ENCODE measurements at regions of chr2 and their contacts with region 1.

Region 1: GRCh38 chr2:207746131-207746530 is 23.6 kb downstream of the FZD5 start:
- DNase-seq: no peak
- H3K4me3 Mint-ChIP-seq: no peak overlapping the region
- H3K27ac Mint-ChIP-seq: no peak overlapping the region
- H3K4me1 Mint-ChIP-seq: no peaks in the 10 kb centered on the region
- H3K27me3 Mint-ChIP-seq: no peaks in the 10 kb centered on the region

Region 2: DNA sequence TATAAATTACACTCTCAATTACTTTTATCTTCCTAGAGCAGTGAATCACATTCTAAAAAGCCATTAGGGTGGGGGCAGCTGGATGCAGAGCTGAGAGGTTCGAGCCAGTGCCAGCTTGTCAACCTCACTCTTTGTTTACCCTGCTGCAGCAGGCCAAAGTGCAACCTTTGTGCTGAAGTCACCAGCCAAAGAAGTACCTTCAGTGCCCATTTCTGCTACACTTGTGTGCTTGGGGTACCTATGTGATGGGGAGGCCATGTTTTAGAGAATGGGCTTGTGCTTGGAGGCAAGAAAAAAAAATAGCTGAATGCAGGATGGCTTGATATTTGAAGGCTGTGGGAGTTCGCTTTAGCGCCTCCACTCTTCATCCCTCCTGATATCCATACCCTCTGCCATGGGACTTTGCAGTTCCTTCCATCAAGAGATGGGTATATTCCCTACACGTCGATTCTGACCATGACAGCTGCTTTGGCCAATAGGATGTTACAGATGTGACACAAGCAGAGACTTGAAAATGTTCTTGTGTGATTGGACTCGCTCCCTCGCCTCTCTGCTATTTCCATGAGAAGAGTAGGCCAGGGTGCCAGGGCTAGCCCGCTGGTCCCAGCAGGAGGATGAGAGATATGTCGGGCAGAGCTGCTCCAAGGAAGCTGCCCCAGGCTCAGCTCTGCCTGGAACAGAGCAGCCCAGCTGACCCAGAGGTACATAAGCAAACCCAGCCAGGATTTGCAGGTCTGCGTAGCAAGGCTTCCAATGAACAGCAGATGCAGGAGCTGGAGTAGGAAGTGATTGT is 36.3 kb after region 1 on chr2:
- intact Hi-C with region 1: no loop called
- DNase-seq: no peak
- H3K4me3 Mint-ChIP-seq: no peak overlapping the region
- H3K27ac Mint-ChIP-seq: no peak overlapping the region
- H3K4me1 Mint-ChIP-seq: no peaks in the 10 kb centered on the region
- H3K27me3 Mint-ChIP-seq: peaks cover 6% of the 10 kb centered on the region

Region 3: GRCh38 chr2:207974216-207974605 is 228.1 kb after region 1 on chr2:
- intact Hi-C with region 1: loop called (anchors 1 kb)
- DNase-seq: no peak
- H3K4me3 Mint-ChIP-seq: no peak overlapping the region
- H3K27ac Mint-ChIP-seq: no peak overlapping the region
- H3K4me1 Mint-ChIP-seq: peaks cover 4% of the 10 kb centered on the region
- H3K27me3 Mint-ChIP-seq: no peaks in the 10 kb centered on the region

Region 4: GRCh38 chr2:208040199-208041171 is 294.4 kb after region 1 on chr2:
- intact Hi-C with region 1: loop called (anchors 1 kb)
- DNase-seq: peak; percentile 56
- H3K4me3 Mint-ChIP-seq: no peak overlapping the region
- H3K27ac Mint-ChIP-seq: no peak overlapping the region
- H3K4me1 Mint-ChIP-seq: no peaks in the 10 kb centered on the region
- H3K27me3 Mint-ChIP-seq: peaks cover 4% of the 10 kb centered on the region

Region 5: DNA sequence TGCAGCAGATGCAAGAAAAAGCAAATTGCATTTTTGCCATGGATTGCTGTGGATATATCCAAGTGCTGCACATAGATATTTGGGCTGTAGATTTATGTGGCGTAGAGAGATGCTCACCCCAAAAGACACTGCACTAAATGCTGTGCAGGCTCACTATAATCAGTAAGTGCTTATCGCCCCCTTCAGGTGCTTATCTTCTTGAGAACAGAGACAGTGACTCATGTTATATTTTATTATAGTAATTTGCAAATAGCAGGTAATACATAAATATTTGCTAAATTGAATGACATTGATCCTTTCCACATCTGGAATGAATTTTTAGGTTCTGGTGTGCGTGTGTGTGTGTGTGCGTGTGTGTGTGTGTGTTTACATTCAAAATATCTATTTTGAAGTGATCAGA is 316.0 kb after region 1 on chr2:
- intact Hi-C with region 1: loop called (anchors 1 kb)
- DNase-seq: no peak
- H3K4me3 Mint-ChIP-seq: no peak overlapping the region
- H3K27ac Mint-ChIP-seq: no peak overlapping the region
- H3K4me1 Mint-ChIP-seq: no peaks in the 10 kb centered on the region
- H3K27me3 Mint-ChIP-seq: peaks cover 4% of the 10 kb centered on the region

Region 6: GRCh38 chr2:208072250-208072892 is 326.2 kb after region 1 on chr2:
- intact Hi-C with region 1: loop called (anchors 1 kb)
- DNase-seq: peak; percentile 19
- H3K4me3 Mint-ChIP-seq: no peak overlapping the region
- H3K27ac Mint-ChIP-seq: no peak overlapping the region
- H3K4me1 Mint-ChIP-seq: no peaks in the 10 kb centered on the region
- H3K27me3 Mint-ChIP-seq: peaks cover 5% of the 10 kb centered on the region